Activated CD8-positive, alpha-beta T cell treated with anti-CD3 and anti-CD28 coated beads for 36 hours (primary cell): ENCODE measurements at regions of chr6 and their contacts with region 1.

Region 1: GRCh38 chr6:68634726-68635411 is at the start of gene ADGRB3:
- DNase-seq: peak; percentile 36
- ATAC-seq: peak; percentile 78
- H3K4me3 Mint-ChIP-seq: peak within 1 kb of the TSS; percentile 62
- H3K27ac Mint-ChIP-seq: no peak within 1 kb of the TSS
- H3K4me1 Mint-ChIP-seq: peaks cover 13% of the 10 kb centered on the region
- H3K27me3 Mint-ChIP-seq: peaks cover 50% of the 10 kb centered on the region
- CTCF ChIP-seq: no peak
- total RNA-seq, gene ADGRB3: not detected

Region 2: GRCh38 chr6:68967549-68968300 is 332.9 kb after region 1 on chr6:
- CTCF ChIA-PET with region 1: interaction called, 3 read pairs
- POLR2A ChIA-PET with region 1: no interaction called
- intact Hi-C with region 1: loop called (anchors 5 kb)
- DNase-seq: peak; percentile 65
- ATAC-seq: peak; percentile 75
- H3K4me3 Mint-ChIP-seq: no peak overlapping the region
- H3K27ac Mint-ChIP-seq: no peak overlapping the region
- H3K4me1 Mint-ChIP-seq: peaks cover 4% of the 10 kb centered on the region
- H3K27me3 Mint-ChIP-seq: no peaks in the 10 kb centered on the region
- CTCF ChIP-seq: peak; percentile 89